GM12878 (cell line): ENCODE measurements at regions of chr1 and their contacts with region 1.

Region 1: DNA sequence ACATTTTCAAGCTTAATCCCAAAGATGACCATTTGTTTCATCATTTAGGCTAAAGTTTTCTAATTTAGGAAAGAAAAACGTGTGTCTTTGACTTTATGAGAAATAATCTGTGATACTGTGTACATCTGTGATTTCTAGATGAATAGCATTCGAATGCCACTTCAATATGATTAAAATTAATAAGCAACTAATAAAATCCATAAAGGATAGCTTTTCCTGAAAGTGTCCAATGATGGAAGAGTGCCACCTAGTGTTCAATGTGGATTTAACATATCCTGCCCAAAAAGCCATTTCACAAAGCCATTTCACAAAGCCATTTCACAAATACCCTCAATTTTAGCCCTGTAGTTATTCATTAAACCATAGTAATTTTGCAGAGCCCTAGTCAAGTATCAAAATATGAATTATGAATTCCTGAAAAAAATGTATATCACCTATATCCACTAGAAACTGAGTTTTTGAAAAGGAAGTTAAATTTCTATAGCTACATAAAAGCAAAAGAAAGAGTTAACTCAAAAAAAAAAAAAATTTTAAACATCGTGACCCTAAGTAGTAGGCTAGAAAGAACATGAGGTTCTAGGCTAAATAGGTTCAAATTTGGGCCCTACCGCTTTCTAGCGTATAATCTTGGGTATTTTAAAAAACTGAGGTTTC is 19.1 kb downstream of the NME7 start:
- DNase-seq: peak; percentile 19
- ATAC-seq: peak; percentile 61
- H3K4me3 ChIP-seq: no peak overlapping the region
- H3K27ac ChIP-seq: no peak overlapping the region
- H3K4me1 ChIP-seq: no peaks in the 10 kb centered on the region
- H3K27me3 ChIP-seq: no peaks in the 10 kb centered on the region
- CTCF ChIP-seq: peak; percentile 57 to 78 (median 62)
- EP300 ChIP-seq: no peak
- POLR2A ChIP-seq: no peak
- RAD21 ChIP-seq: peak; percentile 92

Region 2: GRCh38 chr1:168585191-168585590 is 763.3 kb before region 1 on chr1:
- CTCF ChIA-PET with region 1: interaction called, 14 read pairs
- POLR2A ChIA-PET with region 1: no interaction called
- RAD21 ChIA-PET with region 1: interaction called, 4 read pairs
- SMC1A ChIA-PET with region 1: interaction called, 3 read pairs
- in situ Hi-C with region 1: no loop called
- intact Hi-C with region 1: no loop called
- DNase-seq: no peak
- ATAC-seq: no peak
- H3K4me3 ChIP-seq: no peak overlapping the region
- H3K27ac ChIP-seq: no peak overlapping the region
- H3K4me1 ChIP-seq: no peaks in the 10 kb centered on the region
- H3K27me3 ChIP-seq: peaks cover 0 to 2% of the 10 kb centered on the region in 2 experiments; a peak in 1 of 4 replicates
- CTCF ChIP-seq: no peak
- EP300 ChIP-seq: no peak
- POLR2A ChIP-seq: no peak
- RAD21 ChIP-seq: no peak

Region 3: DNA sequence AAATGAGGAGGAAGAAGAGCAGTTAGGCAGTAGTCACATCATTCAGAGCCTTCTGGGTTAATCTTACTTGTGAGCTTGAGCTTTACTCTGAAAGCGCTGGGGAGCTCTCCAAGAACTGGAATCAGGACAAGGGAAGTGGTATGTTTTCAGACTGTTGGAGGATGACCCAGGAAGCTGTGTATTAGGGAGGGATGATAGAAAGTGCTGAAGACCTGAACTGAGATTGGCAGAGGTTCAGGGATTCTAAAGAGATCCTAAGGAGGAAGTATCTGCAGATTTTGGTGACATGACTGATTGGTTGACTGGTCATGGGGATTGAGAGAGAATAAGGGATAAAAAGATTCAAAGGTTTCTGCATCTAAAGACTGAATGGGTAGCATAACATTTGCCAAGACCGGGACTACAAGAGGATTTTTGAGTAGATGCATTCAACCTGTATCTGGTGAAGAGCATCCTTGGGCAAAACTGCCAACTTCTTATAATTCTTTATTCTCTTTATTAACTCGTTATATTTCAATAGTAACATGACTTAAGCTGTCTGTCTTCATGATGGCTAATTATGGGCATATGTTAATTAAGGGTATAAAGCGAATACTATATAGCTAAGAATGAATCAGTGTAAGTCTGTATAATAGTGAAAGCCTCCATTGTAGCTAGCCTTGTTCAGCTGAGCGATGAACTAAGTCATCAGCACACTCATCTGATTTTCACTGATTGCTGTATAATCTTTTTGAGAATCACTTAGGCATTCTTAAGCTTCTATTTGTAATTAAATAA is 730.3 kb before region 1 on chr1:
- CTCF ChIA-PET with region 1: interaction called, 17 read pairs
- POLR2A ChIA-PET with region 1: no interaction called
- RAD21 ChIA-PET with region 1: no interaction called
- SMC1A ChIA-PET with region 1: interaction called, 18 read pairs
- in situ Hi-C with region 1: no loop called
- intact Hi-C with region 1: no loop called
- DNase-seq: no peak
- ATAC-seq: no peak
- H3K4me3 ChIP-seq: no peak overlapping the region
- H3K27ac ChIP-seq: no peak overlapping the region
- H3K4me1 ChIP-seq: no peaks in the 10 kb centered on the region
- H3K27me3 ChIP-seq: peaks cover 0 to 3% of the 10 kb centered on the region in 2 experiments; a peak in 2 of 4 replicates
- CTCF ChIP-seq: no peak
- EP300 ChIP-seq: no peak
- POLR2A ChIP-seq: no peak
- RAD21 ChIP-seq: no peak

Region 4: DNA sequence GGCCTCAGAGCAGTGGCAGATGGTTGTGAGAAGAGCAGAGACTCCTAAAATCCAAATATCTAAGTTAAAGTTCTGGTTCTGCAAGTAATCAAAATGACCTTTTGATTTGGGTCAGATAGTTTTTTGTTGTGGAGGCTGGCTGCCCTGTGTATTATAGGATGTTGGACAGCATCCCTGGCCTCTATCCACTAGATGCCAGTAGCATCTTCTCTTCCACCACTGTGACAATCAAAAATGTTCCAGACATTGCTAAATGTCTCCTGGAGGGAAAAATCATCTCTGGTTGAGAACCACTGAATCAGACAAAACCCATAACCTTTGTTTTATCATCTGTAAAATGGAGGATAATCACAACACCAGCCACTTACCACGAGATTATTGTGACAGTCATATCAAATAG is 613.6 kb before region 1 on chr1:
- CTCF ChIA-PET with region 1: interaction called, 4 read pairs
- POLR2A ChIA-PET with region 1: no interaction called
- RAD21 ChIA-PET with region 1: interaction called, 13 read pairs
- SMC1A ChIA-PET with region 1: interaction called, 4 read pairs
- in situ Hi-C with region 1: no loop called
- intact Hi-C with region 1: no loop called
- DNase-seq: no peak
- ATAC-seq: no peak
- H3K4me3 ChIP-seq: no peak overlapping the region
- H3K27ac ChIP-seq: no peak overlapping the region
- H3K4me1 ChIP-seq: no peaks in the 10 kb centered on the region
- H3K27me3 ChIP-seq: peaks cover 0 to 3% of the 10 kb centered on the region in 2 experiments; a peak in 2 of 4 replicates
- CTCF ChIP-seq: peak in 1 of 3 experiments; percentile 25; a peak in 1 of 6 replicates
- EP300 ChIP-seq: no peak
- POLR2A ChIP-seq: no peak
- RAD21 ChIP-seq: peak; percentile 36; the same call in 1 of the 2 replicates

Region 5: DNA sequence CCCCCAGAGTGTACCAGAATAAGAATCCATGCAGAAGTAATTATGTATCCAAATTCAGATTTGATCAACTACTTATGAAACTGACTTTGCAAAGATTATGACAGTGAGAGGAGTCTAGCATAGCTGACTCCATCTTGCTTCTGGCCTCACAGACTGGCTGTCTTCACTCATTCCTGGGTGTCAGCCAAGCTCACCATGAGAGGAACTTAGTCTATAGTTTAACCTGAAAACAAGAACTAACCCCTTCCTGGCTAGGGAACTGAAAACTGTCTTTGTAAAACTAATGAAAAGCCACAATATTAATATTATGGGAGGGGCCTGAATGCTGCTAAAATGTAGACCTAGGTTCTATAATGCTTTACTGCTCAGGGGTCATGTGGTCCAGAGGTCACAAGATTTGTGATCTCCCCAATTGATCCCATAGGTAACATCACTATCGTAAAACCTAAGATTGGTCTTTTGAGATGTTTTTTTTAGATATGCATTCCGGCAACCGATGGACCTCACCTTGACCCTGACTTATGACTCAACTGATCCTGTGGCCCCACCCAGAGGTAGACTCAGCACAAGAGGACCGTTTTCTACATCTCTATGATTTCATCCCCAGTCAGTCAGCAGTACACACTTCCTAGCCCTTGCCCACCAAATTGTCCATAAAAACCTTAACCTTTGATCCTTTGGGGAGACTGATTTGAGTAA is 186.9 kb before region 1 on chr1:
- CTCF ChIA-PET with region 1: interaction called, 29 read pairs
- POLR2A ChIA-PET with region 1: no interaction called
- RAD21 ChIA-PET with region 1: interaction called, 13 read pairs
- SMC1A ChIA-PET with region 1: interaction called, 21 read pairs
- in situ Hi-C with region 1: no loop called
- intact Hi-C with region 1: no loop called
- DNase-seq: peak; percentile 34
- ATAC-seq: peak; percentile 95
- H3K4me3 ChIP-seq: no peak overlapping the region
- H3K27ac ChIP-seq: no peak overlapping the region; the same call in 1 of the 2 replicates
- H3K4me1 ChIP-seq: peaks cover 12% of the 10 kb centered on the region; the same call in 1 of the 2 replicates
- H3K27me3 ChIP-seq: no peaks in the 10 kb centered on the region
- CTCF ChIP-seq: peak in 1 of 3 experiments; percentile 5; a peak in 1 of 6 replicates
- EP300 ChIP-seq: no peak; a peak in 2 of 4 replicates
- POLR2A ChIP-seq: no peak
- RAD21 ChIP-seq: peak; percentile 66

Region 6: DNA sequence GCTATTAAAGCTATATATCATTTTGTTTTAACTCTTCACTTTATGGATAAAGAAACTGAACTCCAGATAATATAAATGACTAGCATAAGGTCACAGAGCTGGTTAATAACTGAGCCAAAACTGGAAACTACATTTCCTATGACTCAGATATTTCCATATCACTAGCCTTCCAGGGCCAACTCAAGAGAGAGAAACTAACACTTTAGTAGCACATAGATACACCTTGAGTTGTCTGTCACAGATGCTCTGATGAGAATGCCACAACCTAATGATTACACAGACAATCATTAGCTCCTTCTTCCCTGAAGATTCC is 21.6 kb before region 1 on chr1:
- CTCF ChIA-PET with region 1: interaction called, 10 read pairs
- POLR2A ChIA-PET with region 1: no interaction called
- RAD21 ChIA-PET with region 1: interaction called, 4 read pairs
- SMC1A ChIA-PET with region 1: interaction called, 12 read pairs
- in situ Hi-C with region 1: no loop called
- intact Hi-C with region 1: no loop called
- DNase-seq: peak; percentile 28
- ATAC-seq: peak; percentile 94
- H3K4me3 ChIP-seq: no peak overlapping the region
- H3K27ac ChIP-seq: no peak overlapping the region
- H3K4me1 ChIP-seq: no peaks in the 10 kb centered on the region
- H3K27me3 ChIP-seq: no peaks in the 10 kb centered on the region
- CTCF ChIP-seq: no peak
- EP300 ChIP-seq: no peak
- POLR2A ChIP-seq: no peak
- RAD21 ChIP-seq: no peak

Region 7: DNA sequence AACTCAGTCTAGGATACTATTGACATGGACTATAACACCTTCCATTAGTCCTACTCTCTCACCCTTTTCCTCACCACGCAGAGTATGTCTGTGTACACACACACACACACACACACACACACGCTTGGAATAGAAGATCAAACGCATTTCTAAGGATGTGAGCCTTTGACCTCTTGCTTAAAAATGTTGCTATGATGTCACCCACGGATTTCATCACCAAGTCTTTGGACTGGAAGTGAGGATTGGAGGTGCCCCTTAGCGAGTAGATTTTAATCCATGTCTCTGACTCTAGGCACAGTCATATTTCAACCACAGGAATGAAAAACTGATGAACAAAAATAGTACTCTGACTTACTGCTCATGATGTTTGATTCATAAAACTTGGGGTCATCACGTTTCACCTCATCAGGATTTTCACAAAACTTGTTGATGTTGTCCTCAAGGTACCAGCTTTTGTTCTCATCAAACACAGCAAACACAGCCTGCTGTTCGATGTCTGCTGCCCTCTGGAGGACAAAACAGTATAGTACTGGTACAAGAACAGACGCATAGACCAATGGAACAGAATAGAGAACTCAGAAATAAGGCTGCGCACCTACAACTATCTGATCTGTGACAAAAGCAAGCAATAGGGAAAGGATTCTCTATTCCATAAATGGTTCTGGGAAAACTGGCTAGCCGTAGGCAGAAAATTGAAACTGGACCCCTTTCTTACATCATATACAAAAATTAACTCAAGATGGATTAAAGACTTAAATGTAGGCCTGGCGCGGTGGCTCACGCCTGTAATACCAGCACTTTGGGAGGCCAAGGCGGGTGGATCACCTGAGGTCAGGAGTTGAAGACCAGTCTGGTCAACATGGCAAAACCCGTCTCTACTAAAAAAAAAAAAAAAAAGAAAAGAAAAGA is 197.8 kb after region 1 on chr1:
- CTCF ChIA-PET with region 1: interaction called, 13 read pairs
- POLR2A ChIA-PET with region 1: no interaction called
- RAD21 ChIA-PET with region 1: interaction called, 6 read pairs
- SMC1A ChIA-PET with region 1: interaction called, 4 read pairs
- in situ Hi-C with region 1: no loop called
- intact Hi-C with region 1: no loop called
- DNase-seq: peak; percentile 40
- ATAC-seq: peak; percentile 92
- H3K4me3 ChIP-seq: no peak overlapping the region
- H3K27ac ChIP-seq: no peak overlapping the region
- H3K4me1 ChIP-seq: no peaks in the 10 kb centered on the region
- H3K27me3 ChIP-seq: no peaks in the 10 kb centered on the region
- CTCF ChIP-seq: peak; percentile 63 to 69 (median 66)
- EP300 ChIP-seq: no peak
- POLR2A ChIP-seq: no peak
- RAD21 ChIP-seq: peak; percentile 75